Activated CD4-positive, alpha-beta T cell treated with anti-CD3 and anti-CD28 coated beads for 36 hours (primary cell): ENCODE measurements at regions of chr20 and their contacts with region 1.

Region 1: DNA sequence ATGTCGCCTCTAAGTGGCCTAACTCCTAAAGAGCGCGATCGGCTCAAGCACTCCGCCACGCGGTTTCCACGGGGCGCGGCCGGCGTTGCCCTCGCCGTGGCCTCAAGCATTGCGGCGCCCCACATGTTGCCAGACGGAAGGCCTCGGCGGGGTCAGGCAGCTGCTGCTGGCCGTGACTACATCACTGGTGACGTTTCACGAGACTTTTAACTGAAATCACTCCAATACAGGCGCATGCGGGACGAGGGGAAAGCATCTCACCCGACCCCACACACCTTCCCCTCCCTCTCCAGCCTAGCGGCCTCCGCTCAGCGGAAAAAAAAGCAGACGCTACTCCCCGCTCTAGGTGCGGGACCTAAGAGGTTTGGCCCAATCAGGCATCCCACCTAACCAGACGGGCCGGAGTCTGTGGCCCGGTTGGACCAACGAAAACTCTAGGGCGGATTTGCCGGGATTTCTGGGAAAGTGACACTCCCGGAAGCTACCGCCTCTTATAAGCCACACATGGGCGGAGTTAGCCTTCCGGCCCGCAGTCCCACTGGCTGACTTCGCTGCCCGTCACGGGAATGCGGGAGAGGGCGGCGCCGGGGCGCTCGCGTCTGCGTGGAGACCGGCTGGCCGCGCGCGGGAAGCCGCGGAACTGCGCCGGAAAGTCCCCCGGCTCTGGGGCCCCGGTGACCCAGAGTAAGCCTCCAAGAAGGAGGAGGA is at the start of gene NXT1:
- DNase-seq: peak; percentile 96
- ATAC-seq: peak; percentile 93
- H3K4me3 Mint-ChIP-seq: peak within 1 kb of the TSS; percentile 85
- H3K27ac Mint-ChIP-seq: peak within 1 kb of the TSS; percentile 100
- H3K4me1 Mint-ChIP-seq: peaks cover 24% of the 10 kb centered on the region
- H3K27me3 Mint-ChIP-seq: no peaks in the 10 kb centered on the region
- total RNA-seq, gene NXT1: 34.4 to 35.5 TPM

Region 2: DNA sequence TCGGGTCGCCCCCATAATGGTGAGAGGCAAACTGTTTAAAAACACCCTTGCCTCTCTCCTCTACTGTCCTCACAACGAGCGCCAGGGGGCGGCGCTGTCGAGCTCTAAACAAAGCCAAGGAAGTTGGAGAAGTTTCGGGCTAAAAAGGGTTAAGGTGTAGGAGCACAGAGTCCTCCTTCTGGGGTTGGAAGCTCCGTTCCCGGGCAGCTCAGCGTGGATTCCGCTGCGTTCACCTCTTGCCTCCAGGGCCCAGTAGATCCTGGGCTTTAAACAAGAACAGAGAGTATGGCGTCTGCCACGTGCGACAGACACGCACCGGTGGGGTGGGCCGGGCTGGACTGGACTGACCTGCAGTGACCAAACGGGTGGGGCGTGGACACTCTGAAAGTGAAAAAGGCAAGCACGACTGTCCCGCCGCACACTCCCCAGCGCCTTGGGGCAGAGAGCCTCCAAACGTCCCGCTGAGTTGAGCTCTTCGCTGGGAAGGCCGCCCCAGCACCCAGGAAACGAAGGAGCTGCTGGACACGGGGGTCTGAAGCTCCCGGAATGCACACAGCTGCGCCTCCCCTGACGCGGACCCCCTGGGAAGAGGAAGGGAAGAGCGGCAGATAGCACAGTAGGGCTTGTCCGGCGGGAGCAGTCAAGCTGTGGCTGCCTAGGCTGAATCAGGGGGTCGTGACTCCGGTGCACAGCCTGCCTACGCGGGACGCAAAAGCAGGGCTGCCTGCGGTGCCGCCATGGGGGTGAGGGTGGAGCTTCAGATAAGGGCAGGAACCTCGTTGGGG is 299.3 kb before region 1 on chr20:
- CTCF ChIA-PET with region 1: no interaction called
- POLR2A ChIA-PET with region 1: no interaction called
- intact Hi-C with region 1: loop called in 1 of 2 experiments (anchors 10 kb)
- DNase-seq: peak; percentile 78
- ATAC-seq: peak; percentile 49
- H3K4me3 Mint-ChIP-seq: no peak overlapping the region
- H3K27ac Mint-ChIP-seq: no peak overlapping the region
- H3K4me1 Mint-ChIP-seq: peaks cover 5% of the 10 kb centered on the region
- H3K27me3 Mint-ChIP-seq: peaks cover 52% of the 10 kb centered on the region

Region 3: GRCh38 chr20:23147964-23148730 is 202.2 kb before region 1 on chr20:
- CTCF ChIA-PET with region 1: no interaction called
- POLR2A ChIA-PET with region 1: no interaction called
- intact Hi-C with region 1: loop called (anchors 5 to 10 kb)
- DNase-seq: peak; percentile 76
- ATAC-seq: peak; percentile 93
- H3K4me3 Mint-ChIP-seq: no peak overlapping the region
- H3K27ac Mint-ChIP-seq: peak overlapping the region; percentile 88
- H3K4me1 Mint-ChIP-seq: peaks cover 29% of the 10 kb centered on the region
- H3K27me3 Mint-ChIP-seq: peaks cover 8% of the 10 kb centered on the region

Region 4: DNA sequence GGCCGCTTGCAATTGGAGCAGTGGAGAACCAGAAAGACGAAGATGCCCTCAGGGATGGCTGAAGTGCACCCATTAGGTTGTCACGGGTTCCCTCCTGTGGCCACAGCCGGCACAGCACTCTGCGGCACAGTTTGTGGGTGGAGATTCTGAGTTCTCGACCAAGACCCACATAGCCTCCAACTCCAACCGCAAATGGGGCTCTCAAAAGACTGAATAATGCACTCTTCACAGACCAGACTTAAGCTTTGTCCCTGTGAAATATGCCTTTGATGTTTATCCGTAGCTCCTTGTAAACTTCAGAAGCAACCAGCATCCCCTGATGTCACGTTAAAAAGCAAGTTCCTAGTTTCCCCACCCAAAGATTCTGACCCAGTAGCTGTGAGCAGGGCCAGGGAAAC is 256.3 kb after region 1 on chr20:
- CTCF ChIA-PET with region 1: no interaction called
- POLR2A ChIA-PET with region 1: no interaction called
- intact Hi-C with region 1: loop called in 1 of 2 experiments (anchors 5 kb)
- DNase-seq: peak; percentile 83
- ATAC-seq: peak; percentile 84
- H3K4me3 Mint-ChIP-seq: no peak overlapping the region
- H3K27ac Mint-ChIP-seq: no peak overlapping the region
- H3K4me1 Mint-ChIP-seq: no peaks in the 10 kb centered on the region
- H3K27me3 Mint-ChIP-seq: no peaks in the 10 kb centered on the region